GM10248 (cell line): ENCODE measurements at regions of chr6 and their contacts with region 1.

Region 1: GRCh38 chr6:135497412-135498269 is at the start of gene AHI1:
- DNase-seq: peak; percentile 93
- CTCF ChIP-seq: no peak

Region 2: GRCh38 chr6:135475292-135475886 is 22.3 kb before region 1 on chr6:
- CTCF ChIA-PET with region 1: interaction called, 13 read pairs
- POLR2A ChIA-PET with region 1: no interaction called
- DNase-seq: no peak
- CTCF ChIP-seq: no peak

Region 3: GRCh38 chr6:135522965-135523692 is 25.5 kb after region 1 on chr6:
- CTCF ChIA-PET with region 1: no interaction called
- POLR2A ChIA-PET with region 1: no interaction called
- DNase-seq: no peak
- CTCF ChIP-seq: no peak